ENCODE measurements at regions of chr18 and their contacts with region 1.

Region 1: GRCh38 chr18:73842795-73843394 is 304.7 kb downstream of the FBXO15 start:
- DNase-seq: peak; percentile 46
- CTCF ChIP-seq: peak; percentile 95

Region 2: DNA sequence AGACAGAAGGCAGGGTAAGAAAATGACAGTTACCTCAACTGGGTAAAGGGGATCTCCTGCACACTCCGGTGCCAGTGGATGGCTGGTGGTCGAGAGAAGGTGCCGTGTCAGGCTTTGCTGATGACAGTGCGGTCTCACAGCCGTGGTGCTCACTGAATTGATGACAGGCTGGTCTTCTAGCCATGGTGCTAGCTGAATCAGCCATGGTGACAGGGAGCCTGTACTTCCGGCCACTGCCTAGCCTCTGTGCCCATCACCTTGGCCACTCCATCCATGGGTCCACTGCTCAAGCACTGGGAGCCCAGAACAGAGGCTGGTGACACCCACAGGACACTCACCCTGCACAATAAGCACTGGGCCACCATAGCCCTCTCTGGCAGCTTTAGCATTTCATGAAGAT is 11.2 kb before region 1 on chr18:
- CTCF ChIA-PET with region 1: interaction called, 25 read pairs
- POLR2A ChIA-PET with region 1: no interaction called
- DNase-seq: no peak
- CTCF ChIP-seq: no peak

Measured in GM10248 (cell line).